OCI-LY7 (cell line): ENCODE measurements at regions of chr14 and their contacts with region 1.

Region 1: GRCh38 chr14:68816262-68816942 is 23.5 kb upstream of the ZFP36L1 start:
- DNase-seq: peak; percentile 95
- H3K4me3 ChIP-seq: peak overlapping the region; percentile 61
- H3K27ac ChIP-seq: peak overlapping the region; percentile 92
- H3K4me1 ChIP-seq: peaks cover 82% of the 10 kb centered on the region
- CTCF ChIP-seq: peak; percentile 90

Region 2: GRCh38 chr14:67943947-67944346 is 872.5 kb before region 1 on chr14:
- CTCF ChIA-PET with region 1: no interaction called
- POLR2A ChIA-PET with region 1: no interaction called
- intact Hi-C with region 1: loop called (anchors 1 kb)
- DNase-seq: peak; percentile 80
- H3K4me3 ChIP-seq: no peak overlapping the region
- H3K27ac ChIP-seq: no peak overlapping the region
- H3K4me1 ChIP-seq: no peaks in the 10 kb centered on the region
- CTCF ChIP-seq: peak; percentile 98

Region 3: DNA sequence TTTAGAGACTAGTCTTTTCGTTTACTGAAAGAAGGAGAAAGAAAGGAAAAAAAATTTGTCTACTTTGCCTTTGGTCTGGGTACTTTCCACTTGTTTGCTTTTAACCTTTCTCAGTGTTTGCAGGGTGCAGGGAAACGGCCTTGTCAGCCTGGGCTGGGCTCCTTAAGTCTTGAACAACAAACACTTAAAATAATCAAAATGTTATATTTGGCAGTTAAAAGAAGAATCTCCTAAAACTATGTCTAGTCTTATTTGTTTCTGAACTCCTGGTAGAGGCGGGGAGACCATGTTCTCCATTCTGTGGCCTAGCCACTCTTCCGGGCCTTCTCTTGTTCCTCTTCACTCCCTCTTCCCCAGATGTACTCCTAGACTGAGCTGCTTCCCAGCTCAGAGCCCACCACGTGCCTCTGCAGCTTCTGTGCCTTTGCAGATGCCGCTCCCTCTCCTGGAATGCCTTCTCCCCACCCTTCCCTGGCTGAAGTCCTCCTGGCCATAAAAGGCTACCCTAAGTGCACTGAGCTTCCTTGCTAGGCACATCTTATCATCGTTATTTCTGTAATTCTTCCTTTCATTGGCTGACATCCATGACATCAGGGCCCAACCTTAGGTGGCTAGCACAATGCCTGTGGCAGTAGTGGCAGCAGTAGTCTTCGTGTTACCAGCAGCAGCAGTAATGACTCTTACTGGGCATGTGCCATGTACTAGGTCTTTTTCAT is 456.4 kb before region 1 on chr14:
- CTCF ChIA-PET with region 1: no interaction called
- POLR2A ChIA-PET with region 1: interaction called, 3 read pairs
- intact Hi-C with region 1: loop called (anchors 2 kb)
- DNase-seq: no peak
- H3K4me3 ChIP-seq: no peak overlapping the region
- H3K27ac ChIP-seq: no peak overlapping the region
- H3K4me1 ChIP-seq: peaks cover 44% of the 10 kb centered on the region
- CTCF ChIP-seq: no peak

Region 4: GRCh38 chr14:68506021-68506644 is 310.3 kb before region 1 on chr14:
- CTCF ChIA-PET with region 1: no interaction called
- POLR2A ChIA-PET with region 1: interaction called, 3 read pairs
- intact Hi-C with region 1: loop called (anchors 5 kb)
- DNase-seq: peak; percentile 32
- H3K4me3 ChIP-seq: peak overlapping the region; percentile 17
- H3K27ac ChIP-seq: peak overlapping the region; percentile 86
- H3K4me1 ChIP-seq: peaks cover 55% of the 10 kb centered on the region
- CTCF ChIP-seq: no peak

Region 5: DNA sequence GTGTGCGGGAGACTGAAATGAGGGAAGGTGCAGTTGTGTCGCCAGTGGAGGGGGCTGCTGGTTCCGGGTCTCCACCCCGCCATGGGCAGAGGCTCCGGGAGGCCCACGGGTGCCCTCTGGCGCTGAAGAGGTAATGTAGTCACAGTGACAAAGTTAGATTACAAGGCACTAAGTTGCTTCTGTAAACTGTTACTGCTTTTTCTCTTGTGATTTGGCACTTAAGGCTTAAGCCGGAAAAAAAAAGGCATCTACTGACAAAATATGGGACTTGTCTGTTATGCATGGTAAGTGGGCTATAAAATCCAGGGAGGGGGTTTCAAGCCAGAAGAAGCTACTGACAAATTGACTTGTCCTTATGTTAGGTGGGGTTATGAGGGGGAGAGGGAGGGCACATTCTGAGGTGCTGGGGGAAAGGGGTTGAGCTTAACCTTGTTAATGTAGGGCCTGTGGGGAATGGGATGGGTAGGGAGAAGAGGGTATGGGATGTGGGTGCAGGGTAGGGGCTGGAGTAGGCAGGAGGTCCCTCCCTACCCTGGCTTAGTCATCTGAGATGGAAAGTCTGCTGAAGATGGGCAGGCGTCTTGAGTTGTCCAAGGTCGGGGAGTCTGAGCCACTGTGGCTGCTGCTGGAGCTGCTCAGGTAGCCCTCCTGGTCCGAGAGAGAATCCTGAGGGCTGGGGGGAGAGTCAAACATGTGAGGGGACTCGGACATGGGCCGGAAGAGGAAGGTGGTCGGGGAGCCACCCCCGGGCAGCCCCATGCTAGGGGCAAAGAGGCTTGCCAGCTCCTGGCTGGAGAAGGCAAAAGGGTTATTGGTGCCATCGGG is 27.2 kb before region 1 on chr14:
- CTCF ChIA-PET with region 1: interaction called, 24 read pairs
- POLR2A ChIA-PET with region 1: interaction called, 126 read pairs
- intact Hi-C with region 1: loop called (anchors 1 kb)
- DNase-seq: peak; percentile 89
- H3K4me3 ChIP-seq: peak overlapping the region; percentile 87
- H3K27ac ChIP-seq: peak overlapping the region; percentile 92
- H3K4me1 ChIP-seq: peaks cover 56% of the 10 kb centered on the region
- CTCF ChIP-seq: peak; percentile 90